Activated CD8-positive, alpha-beta memory T cell treated with anti-CD3 and anti-CD28 coated beads, Interleukin-2, amount 10 ng/mL, durations not matched to agents 7 days and 5 days (primary cell): ENCODE measurements at regions of chr6 and their contacts with region 1.

Region 1: GRCh38 chr6:31597006-31597405 is 4.2 kb upstream of the NCR3 start:
- DNase-seq: no peak
- ATAC-seq: peak; percentile 65
- H3K4me3 Mint-ChIP-seq: no peak overlapping the region
- H3K27ac Mint-ChIP-seq: peak overlapping the region; percentile 34
- H3K4me1 Mint-ChIP-seq: peaks cover 50% of the 10 kb centered on the region
- H3K27me3 Mint-ChIP-seq: no peaks in the 10 kb centered on the region

Region 2: DNA sequence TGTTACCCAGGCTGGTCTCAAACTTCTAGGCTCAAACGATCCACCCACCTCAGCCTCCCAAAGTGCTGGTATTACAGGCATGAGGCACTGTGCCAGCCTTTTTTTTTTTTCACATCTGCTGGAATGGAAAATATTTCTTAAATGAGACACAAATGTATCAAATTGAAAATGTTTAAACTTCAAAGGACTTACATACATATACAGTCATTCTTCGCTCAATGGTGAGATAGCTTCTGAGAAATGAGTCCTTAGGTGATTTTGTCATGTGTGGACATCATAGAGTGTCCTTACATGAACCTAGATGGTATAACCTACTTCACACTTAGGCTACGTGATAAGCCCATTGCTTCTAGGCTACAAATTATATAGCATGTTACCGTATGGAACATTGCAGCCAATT is 150.5 kb before region 1 on chr6:
- CTCF ChIA-PET with region 1: no interaction called
- DNase-seq: no peak
- ATAC-seq: no peak
- H3K4me3 Mint-ChIP-seq: no peak overlapping the region
- H3K27ac Mint-ChIP-seq: no peak overlapping the region
- H3K4me1 Mint-ChIP-seq: peaks cover under 1% of the 10 kb centered on the region
- H3K27me3 Mint-ChIP-seq: peaks cover 49% of the 10 kb centered on the region

Region 3: DNA sequence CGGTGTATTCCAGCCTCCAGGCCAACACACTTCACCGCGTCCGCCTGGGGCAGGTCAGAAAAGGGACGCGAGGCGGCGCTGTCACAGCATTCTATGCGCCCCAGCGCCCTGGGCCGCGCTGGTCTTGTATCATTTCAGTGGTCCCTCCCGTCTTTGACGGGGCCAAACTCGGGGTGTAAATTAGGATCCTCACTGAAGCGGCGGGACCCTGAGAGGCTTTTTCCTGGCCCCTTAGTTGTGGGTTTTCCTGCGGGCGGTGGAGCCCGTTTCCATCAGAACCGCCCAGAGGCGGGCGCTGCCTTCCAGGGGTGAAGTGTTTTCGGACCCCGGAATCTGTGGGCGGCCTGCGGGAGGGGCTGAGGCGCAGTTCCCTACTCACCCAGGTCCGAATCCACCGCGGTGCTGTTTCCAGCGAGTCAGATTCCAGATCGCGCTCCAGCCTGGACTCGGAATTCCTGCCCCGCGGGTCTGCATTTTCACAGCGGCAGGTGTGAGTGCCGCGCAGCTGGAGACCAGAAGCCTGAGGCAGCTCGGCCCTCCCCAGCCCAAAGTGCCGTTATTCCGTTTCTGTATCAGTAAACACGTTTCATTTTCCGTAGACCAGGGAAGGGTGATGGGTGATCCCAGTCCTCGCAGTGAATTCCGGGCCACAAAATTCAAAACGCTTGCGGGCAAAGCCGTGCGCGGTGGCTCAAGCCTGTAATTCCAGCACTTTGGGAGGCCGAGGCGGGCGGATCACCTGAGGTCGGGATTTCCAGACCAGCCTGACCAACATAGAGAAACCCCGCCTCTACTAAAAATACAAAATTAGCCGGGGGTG is 102.9 kb before region 1 on chr6:
- CTCF ChIA-PET with region 1: interaction called, 66 read pairs
- DNase-seq: peak; percentile 86
- ATAC-seq: peak; percentile 54
- H3K4me3 Mint-ChIP-seq: peak overlapping the region; percentile 76
- H3K27ac Mint-ChIP-seq: peak overlapping the region; percentile 96
- H3K4me1 Mint-ChIP-seq: peaks cover 56% of the 10 kb centered on the region
- H3K27me3 Mint-ChIP-seq: no peaks in the 10 kb centered on the region

Region 4: GRCh38 chr6:31559958-31560696 is 36.9 kb before region 1 on chr6:
- CTCF ChIA-PET with region 1: interaction called, 128 read pairs
- DNase-seq: peak; percentile 79
- ATAC-seq: peak; percentile 77
- H3K4me3 Mint-ChIP-seq: peak overlapping the region; percentile 26
- H3K27ac Mint-ChIP-seq: peak overlapping the region; percentile 82
- H3K4me1 Mint-ChIP-seq: peaks cover 61% of the 10 kb centered on the region
- H3K27me3 Mint-ChIP-seq: peaks cover 33% of the 10 kb centered on the region

Region 5: GRCh38 chr6:31568537-31568961 is 28.5 kb before region 1 on chr6:
- CTCF ChIA-PET with region 1: interaction called, 931 read pairs
- DNase-seq: peak; percentile 89
- ATAC-seq: peak; percentile 68
- H3K4me3 Mint-ChIP-seq: peak overlapping the region; percentile 8
- H3K27ac Mint-ChIP-seq: peak overlapping the region; percentile 67
- H3K4me1 Mint-ChIP-seq: peaks cover 63% of the 10 kb centered on the region
- H3K27me3 Mint-ChIP-seq: peaks cover 49% of the 10 kb centered on the region

Region 6: DNA sequence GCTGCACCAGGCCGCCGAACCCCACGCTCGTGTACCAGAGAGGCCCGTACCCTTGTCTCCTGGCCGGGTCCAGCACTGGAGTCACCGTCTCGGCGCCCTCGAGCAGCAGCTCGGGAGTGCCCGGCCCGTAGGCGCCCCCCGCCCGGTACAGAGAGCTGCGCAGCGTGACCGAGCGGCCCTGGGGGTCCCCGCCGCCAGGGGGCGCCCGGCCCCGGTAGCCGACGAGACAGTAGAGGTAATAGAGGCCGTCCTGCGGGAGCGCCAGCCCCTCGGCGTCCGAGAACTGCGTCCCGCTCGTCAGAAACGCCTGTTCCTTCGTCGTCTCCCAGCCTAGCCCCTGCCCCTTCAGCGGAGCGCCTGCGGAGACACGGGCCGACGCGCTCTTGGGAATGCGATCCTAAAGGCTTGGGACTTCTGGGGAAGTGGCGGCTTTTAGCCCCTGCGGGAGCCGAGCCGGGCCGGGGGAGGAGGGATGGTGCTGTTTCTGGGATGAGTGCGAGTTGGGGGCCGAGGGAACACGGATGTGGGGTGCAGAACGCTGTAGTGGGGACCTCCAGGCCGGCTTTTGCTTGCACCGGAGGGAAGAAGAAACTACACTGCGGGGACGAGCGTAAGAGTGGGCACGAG is 16.1 kb before region 1 on chr6:
- CTCF ChIA-PET with region 1: interaction called, 931 read pairs
- DNase-seq: peak; percentile 92
- ATAC-seq: peak; percentile 71
- H3K4me3 Mint-ChIP-seq: peak overlapping the region; percentile 86
- H3K27ac Mint-ChIP-seq: peak overlapping the region; percentile 94
- H3K4me1 Mint-ChIP-seq: peaks cover 70% of the 10 kb centered on the region
- H3K27me3 Mint-ChIP-seq: no peaks in the 10 kb centered on the region

Region 7: DNA sequence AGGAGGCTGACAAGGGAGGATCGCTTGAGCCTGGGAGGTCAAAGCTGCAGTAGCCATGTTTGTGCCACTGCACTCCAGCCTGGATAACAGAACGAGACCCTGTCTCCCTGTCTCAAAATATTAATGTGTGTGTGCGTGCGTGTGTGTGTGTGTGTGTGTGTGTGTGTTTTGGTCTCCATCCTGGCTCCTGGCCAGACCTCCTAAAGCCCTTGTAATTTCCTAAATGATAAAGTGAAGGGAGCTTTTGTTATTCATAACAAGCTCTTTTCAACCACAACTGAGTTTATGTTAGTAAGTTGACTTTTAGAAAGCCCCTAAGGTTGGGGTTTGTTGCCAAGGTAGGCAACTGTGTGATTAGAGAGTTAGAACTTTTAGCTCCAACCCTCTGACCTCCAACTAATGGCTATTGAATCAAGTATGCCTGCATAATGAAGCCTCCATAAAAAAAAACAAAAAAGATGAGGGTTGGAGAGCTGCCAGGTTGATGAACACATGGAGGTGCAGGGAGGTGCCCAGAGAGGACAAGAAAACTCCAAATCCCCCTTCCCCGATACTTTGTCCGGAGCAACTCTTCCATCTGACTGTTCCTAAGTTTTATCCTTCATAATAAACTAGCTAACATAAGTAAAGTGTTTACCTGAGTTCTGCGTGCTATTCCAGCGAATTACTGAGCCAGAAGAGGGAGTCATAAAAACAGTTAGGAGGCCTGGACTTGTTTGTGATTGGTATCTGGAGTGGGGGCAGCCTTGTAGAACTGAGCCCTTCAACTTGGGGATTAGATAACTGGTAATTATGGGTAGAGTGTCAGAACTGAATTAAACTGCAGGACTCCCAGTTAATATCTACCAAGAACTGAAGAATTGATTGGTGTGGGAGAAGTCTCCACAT is 12.8 kb after region 1 on chr6:
- CTCF ChIA-PET with region 1: interaction called, 40 read pairs
- DNase-seq: no peak
- ATAC-seq: no peak
- H3K4me3 Mint-ChIP-seq: no peak overlapping the region
- H3K27ac Mint-ChIP-seq: no peak overlapping the region
- H3K4me1 Mint-ChIP-seq: peaks cover 10% of the 10 kb centered on the region
- H3K27me3 Mint-ChIP-seq: no peaks in the 10 kb centered on the region

Region 8: DNA sequence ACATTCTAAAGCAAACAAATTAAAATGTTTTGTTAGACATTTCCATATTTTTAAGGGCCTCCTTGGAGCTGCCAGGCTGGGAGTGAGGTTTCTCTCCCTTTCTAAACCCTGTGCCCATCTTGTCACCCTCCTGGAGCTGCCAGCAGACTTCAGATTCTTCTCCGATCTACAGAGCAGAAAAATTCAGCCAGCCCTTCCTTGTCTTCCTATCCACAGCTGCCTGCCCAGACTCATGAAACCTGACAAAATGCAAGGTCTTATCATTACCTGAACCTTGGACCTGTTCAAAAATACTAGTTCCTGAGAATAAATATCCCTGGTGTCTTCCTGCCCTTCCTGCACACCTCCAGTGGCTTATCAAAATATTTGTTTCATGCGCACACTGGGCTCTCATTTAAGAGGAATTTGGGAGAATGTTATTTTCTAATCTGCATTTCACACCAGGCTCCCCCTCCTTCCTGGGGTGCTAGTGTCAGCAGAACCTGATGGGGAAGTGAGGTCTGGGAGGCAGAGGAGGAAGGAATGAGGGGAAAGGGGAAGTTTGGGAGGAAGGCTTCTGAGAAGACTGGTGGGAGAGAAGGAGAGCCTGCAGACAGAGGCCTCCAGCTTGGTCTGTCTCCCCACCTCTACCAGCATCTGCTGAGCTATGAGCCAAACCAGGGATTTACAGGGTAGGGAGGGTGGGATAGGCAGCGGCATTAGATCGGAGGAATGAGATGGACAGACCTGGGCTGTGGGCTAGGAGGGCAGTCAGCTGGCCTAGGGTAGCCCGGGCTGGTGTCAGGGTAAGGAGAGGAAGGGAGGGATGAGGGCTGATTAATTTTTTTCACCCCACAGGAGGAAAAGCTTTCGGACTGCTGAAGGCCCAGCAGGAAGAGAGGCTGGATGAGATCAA is 17.9 kb after region 1 on chr6 and contains the start of gene AIF1:
- CTCF ChIA-PET with region 1: interaction called, 40 read pairs
- DNase-seq: no peak
- ATAC-seq: no peak
- H3K4me3 Mint-ChIP-seq: peak within 1 kb of the TSS; percentile 73
- H3K27ac Mint-ChIP-seq: peak within 1 kb of the TSS; percentile 89
- H3K4me1 Mint-ChIP-seq: peaks cover 34% of the 10 kb centered on the region
- H3K27me3 Mint-ChIP-seq: no peaks in the 10 kb centered on the region
- total RNA-seq, gene AIF1: 47.4 to 63.4 TPM